ENCODE measurements at regions of chr21 and their contacts with region 1.

Region 1: DNA sequence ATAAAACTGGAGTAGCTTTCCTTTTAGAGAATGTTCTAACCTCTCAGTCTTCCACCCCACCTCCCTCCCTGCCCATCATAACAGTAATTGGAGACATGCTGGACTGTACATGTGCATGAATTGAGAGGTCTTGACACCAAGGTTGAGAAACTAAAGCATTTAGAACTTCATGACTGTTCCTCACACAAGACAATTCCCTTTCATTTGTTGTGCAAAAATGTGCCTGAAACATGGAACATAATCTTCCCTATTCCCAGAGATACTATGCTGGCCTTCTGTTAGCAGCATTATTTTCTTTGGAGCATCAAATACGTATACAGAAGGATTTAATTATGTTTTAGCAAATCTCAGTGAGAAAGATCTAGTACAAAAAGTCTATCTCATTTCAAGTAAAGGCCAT is 97.5 kb upstream of the KCNE2 start:
- DNase-seq: no peak
- H3K4me3 ChIP-seq: no peak overlapping the region
- H3K4me3 Mint-ChIP-seq: no peak overlapping the region
- H3K27ac ChIP-seq: no peak overlapping the region
- H3K27ac Mint-ChIP-seq: no peak overlapping the region
- H3K4me1 ChIP-seq: no peaks in the 10 kb centered on the region
- H3K4me1 Mint-ChIP-seq: no peaks in the 10 kb centered on the region
- H3K27me3 ChIP-seq: no peaks in the 10 kb centered on the region
- H3K27me3 Mint-ChIP-seq: peaks cover 0 to 2% (median 1%) of the 10 kb centered on the region in 3 donors
- CTCF ChIP-seq: no peak

Region 2: GRCh38 chr21:34336756-34337391 is 70.5 kb after region 1 on chr21:
- intact Hi-C with region 1: loop called in 1 of 2 experiments (anchors 5 kb)
- DNase-seq: no peak
- H3K4me3 ChIP-seq: no peak overlapping the region
- H3K4me3 Mint-ChIP-seq: no peak overlapping the region
- H3K27ac ChIP-seq: no peak overlapping the region
- H3K27ac Mint-ChIP-seq: no peak overlapping the region
- H3K4me1 ChIP-seq: peaks cover 5% of the 10 kb centered on the region in 2 donors
- H3K4me1 Mint-ChIP-seq: peaks cover 9% of the 10 kb centered on the region
- H3K27me3 ChIP-seq: no peaks in the 10 kb centered on the region
- H3K27me3 Mint-ChIP-seq: peaks cover 2 to 6% (median 4%) of the 10 kb centered on the region in 3 donors
- CTCF ChIP-seq: no peak

Measured in CD14-positive monocyte (primary cell).